SK-N-SH (cell line): ENCODE measurements at regions of chr13 and their contacts with region 1.

Region 1: DNA sequence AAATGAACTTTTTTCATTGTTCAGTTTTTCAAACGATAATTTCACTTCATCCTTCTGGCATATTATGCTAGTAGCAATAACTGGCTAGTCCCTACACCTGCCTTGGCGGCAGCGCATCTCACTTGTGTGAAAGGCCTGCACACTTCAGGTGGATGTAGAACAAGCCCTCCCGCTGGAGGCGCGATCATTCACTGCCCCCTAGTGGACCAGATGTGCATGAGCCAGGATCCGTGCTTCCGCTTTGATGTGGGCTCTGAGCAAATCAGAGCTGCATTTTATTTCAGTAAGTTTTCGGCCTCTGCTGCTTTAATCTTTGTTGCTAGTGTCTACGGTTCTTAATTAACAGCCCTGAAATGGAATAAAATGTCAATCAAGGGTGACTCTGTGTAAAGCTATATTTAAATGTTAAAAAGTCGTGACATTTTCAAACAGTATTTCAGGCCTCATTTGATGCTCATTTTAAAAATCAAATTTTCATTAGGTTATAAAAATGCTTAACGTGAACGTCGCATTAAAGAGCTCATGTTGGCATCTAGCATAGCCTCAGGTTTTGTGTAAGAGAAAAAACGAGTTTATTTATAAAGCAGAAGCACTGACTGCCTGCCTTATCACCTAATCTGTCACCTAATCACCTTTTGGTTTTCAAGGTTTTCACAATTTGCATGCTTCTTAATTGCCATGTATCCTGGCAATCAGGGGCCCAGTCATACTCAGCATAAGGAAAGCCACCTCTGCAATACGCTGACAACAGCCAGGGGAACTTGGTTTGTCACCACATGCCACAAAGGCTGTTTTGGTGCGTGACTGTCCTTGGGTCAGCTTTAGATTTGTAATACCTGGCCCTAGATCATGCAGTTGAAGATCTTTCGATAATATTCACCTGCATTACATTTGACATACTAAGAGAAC is 112.2 kb downstream of the TEX26 start:
- DNase-seq: peak; percentile 83
- H3K4me3 ChIP-seq: peak overlapping the region in 1 of 2 experiments; percentile 30; a peak in 2 of 4 replicates
- H3K27ac ChIP-seq: peak overlapping the region; percentile 95 to 97
- H3K4me1 ChIP-seq: peaks cover 28 to 35% of the 10 kb centered on the region in 2 experiments
- H3K27me3 ChIP-seq: no peaks in the 10 kb centered on the region
- CTCF ChIP-seq: peak; percentile 94
- EP300 ChIP-seq: no peak
- RAD21 ChIP-seq: peak; percentile 97

Region 2: GRCh38 chr13:30739761-30740642 is 304.6 kb before region 1 on chr13:
- CTCF ChIA-PET with region 1: no interaction called
- POLR2A ChIA-PET with region 1: no interaction called
- DNase-seq: no peak
- H3K4me3 ChIP-seq: peak overlapping the region in 1 of 2 experiments; percentile 35; a peak in 2 of 4 replicates
- H3K27ac ChIP-seq: peak overlapping the region in 1 of 2 experiments; percentile 84; a peak in 2 of 4 replicates
- H3K4me1 ChIP-seq: peaks cover 0 to 32% of the 10 kb centered on the region in 2 experiments; a peak in 2 of 4 replicates
- H3K27me3 ChIP-seq: no peaks in the 10 kb centered on the region
- CTCF ChIP-seq: no peak
- EP300 ChIP-seq: peak in 1 of 2 experiments; percentile 73; a peak in 2 of 4 replicates
- RAD21 ChIP-seq: no peak

Region 3: DNA sequence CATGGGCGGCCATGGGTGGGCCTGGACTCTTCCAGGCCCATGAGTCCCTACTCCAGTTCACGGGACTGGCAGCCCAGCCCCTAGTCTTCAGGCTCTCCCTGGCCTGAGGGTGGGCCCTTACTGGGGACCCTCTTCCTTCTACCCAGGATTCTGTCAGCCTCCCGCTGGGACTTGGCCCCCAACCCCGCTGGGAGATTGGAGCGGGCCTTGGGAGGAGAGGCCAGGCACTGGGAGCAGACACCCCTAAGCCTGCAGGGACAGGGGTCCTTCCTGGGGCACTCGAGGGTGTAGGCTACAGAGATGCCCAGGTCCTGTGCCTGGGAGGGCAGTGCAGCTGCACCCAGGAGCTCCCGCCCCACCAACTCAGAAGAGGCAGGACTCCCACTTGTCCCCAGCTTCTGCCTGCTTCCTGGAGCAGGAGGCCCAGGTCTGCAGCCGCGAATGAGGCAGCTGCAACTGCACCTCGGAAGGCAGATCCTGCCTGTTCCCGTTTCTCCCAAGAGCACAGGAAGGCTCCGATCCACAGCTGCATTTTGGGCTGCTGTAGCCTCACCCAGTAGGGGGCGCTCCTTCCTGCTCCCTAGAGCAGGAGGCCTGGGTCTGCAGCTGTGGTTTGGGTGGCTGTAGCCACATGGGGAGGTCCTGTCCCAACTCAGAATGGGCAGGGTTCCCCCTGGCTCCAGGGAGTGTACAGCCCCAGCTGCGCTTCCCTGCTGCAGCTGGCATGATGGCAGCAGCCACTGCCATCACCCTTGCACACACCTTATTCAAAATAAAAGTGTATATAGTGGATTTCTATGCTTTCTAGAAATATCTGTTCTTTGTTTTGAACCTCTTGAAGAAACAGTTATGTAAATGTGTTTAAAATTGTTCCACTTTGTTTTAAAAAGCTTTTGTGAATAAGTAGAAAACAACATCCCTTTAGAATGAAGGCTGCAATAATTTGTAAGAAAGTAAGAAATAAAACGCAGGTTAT is 65.4 kb before region 1 on chr13:
- CTCF ChIA-PET with region 1: interaction called, 18 read pairs
- POLR2A ChIA-PET with region 1: no interaction called
- DNase-seq: peak; percentile 29
- H3K4me3 ChIP-seq: no peak overlapping the region; a peak in 1 of 4 replicates
- H3K27ac ChIP-seq: no peak overlapping the region
- H3K4me1 ChIP-seq: peaks cover 2 to 7% of the 10 kb centered on the region in 2 experiments; a peak in 2 of 4 replicates
- H3K27me3 ChIP-seq: no peaks in the 10 kb centered on the region
- CTCF ChIP-seq: peak; percentile 58
- EP300 ChIP-seq: no peak
- RAD21 ChIP-seq: peak; percentile 67

Region 4: GRCh38 chr13:31022288-31022895 is 22.2 kb before region 1 on chr13:
- CTCF ChIA-PET with region 1: interaction called, 12 read pairs
- POLR2A ChIA-PET with region 1: no interaction called
- DNase-seq: no peak
- H3K4me3 ChIP-seq: no peak overlapping the region
- H3K27ac ChIP-seq: peak overlapping the region in 1 of 2 experiments; percentile 32; a peak in 1 of 4 replicates
- H3K4me1 ChIP-seq: peaks cover 4% of the 10 kb centered on the region in 2 experiments; a peak in 2 of 4 replicates
- H3K27me3 ChIP-seq: no peaks in the 10 kb centered on the region
- CTCF ChIP-seq: no peak
- EP300 ChIP-seq: no peak
- RAD21 ChIP-seq: no peak

Region 5: GRCh38 chr13:31056644-31057271 is 12.1 kb after region 1 on chr13:
- CTCF ChIA-PET with region 1: interaction called, 11 read pairs
- POLR2A ChIA-PET with region 1: no interaction called
- DNase-seq: peak; percentile 50
- H3K4me3 ChIP-seq: no peak overlapping the region
- H3K27ac ChIP-seq: no peak overlapping the region
- H3K4me1 ChIP-seq: peaks cover 0 to 14% of the 10 kb centered on the region in 2 experiments; a peak in 2 of 4 replicates
- H3K27me3 ChIP-seq: no peaks in the 10 kb centered on the region
- CTCF ChIP-seq: no peak
- EP300 ChIP-seq: no peak
- RAD21 ChIP-seq: no peak